ENCODE measurements at regions of chr6 and their contacts with region 1.

Region 1: GRCh38 chr6:2952557-2953095 is 18.7 kb downstream of the SERPINB6 start:
- DNase-seq: peak; percentile 75
- H3K4me3 ChIP-seq: 0 out of 2 replicates have a peak overlapping the region, but pooled peaks have one; percentile 11
- H3K27ac ChIP-seq: peak overlapping the region; percentile 65
- H3K27me3 ChIP-seq: no peaks in the 10 kb centered on the region
- CTCF ChIP-seq: peak; percentile 99

Region 2: DNA sequence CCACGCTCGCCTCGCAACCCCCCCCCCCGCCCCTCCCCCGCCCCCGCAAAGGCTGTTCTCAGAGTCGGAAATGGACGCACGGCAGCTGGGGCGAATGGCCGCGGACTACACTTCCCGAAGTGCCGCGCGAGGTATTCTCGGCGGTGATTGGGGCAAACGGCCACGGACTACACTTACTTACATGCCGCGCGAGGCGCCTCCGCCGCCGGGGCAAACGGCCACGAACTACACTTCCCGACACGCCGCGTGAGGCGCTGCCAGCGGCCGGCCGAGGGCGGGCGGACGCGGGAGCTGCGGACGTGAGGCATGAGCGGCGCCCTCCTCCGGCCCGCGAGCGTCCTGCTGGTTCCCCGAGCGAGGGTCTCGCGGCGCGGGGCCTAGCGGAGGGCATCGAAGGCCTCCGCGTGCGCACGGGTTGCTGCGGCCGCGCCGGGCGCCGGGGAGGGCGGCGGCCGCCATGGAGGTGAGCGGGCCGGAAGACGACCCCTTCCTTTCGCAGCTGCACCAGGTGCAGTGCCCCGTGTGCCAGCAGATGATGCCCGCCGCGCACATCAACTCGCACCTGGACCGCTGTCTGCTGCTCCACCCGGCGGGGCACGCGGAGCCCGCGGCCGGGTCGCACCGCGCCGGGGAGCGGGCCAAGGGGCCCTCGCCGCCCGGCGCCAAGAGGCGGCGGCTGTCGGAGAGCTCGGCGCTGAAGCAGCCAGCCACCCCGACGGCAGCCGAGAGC is 187.3 kb before region 1 on chr6 and contains the start of gene WRNIP1:
- CTCF ChIA-PET with region 1: interaction called, 18 read pairs
- POLR2A ChIA-PET with region 1: interaction called, 3 read pairs
- DNase-seq: peak; percentile 98
- H3K4me3 ChIP-seq: peak within 1 kb of the TSS; percentile 91
- H3K27ac ChIP-seq: peak within 1 kb of the TSS; percentile 92
- H3K27me3 ChIP-seq: no peaks in the 10 kb centered on the region
- CTCF ChIP-seq: peak; percentile 50
- polyA plus RNA-seq, gene WRNIP1: 28.0 and 35.2 TPM in 2 replicates

Region 3: DNA sequence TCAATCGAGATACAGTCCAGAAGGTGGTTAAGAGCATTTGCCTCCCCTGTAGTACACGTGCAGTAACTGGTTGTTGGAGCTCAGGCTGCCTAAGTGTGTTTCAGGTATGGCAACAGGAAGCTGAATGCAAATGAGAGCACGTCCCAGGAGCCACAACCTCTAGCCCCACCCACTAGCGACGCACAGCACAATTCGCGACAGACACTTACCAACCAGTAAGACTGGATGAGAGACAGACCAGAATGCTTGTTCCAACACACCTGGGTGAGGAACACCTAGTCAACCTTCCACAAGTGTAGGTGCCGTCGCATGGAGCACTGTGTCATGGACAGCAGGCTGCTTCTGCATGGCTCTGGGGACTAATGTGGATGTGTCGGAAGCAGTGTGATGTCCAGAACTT is 103.8 kb before region 1 on chr6:
- CTCF ChIA-PET with region 1: interaction called, 24 read pairs
- POLR2A ChIA-PET with region 1: no interaction called
- DNase-seq: no peak
- H3K4me3 ChIP-seq: no peak overlapping the region
- H3K27ac ChIP-seq: no peak overlapping the region
- H3K27me3 ChIP-seq: no peaks in the 10 kb centered on the region
- CTCF ChIP-seq: no peak

Region 4: DNA sequence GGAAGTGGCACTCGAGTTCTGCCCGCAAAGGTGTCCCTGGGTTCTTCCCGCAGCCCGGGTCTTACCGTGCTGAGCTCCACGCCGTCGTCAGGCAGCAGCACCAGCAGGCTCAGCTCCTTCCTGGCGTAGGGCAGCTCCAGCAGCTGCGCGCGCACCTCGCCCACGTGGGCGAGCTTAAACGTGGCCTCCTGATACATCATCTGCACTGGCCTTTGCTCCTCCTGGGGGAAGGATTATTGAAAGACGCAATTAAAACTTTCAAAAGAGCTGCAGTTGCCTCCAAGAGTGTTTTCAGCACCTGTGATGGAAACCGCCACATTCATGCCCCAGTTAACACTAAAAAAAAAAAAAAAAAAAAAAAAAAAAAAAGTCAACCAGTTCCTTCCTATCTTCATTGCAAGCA is 60.9 kb before region 1 on chr6:
- CTCF ChIA-PET with region 1: interaction called, 11 read pairs
- POLR2A ChIA-PET with region 1: no interaction called
- DNase-seq: no peak
- H3K4me3 ChIP-seq: no peak overlapping the region
- H3K27ac ChIP-seq: no peak overlapping the region
- H3K27me3 ChIP-seq: peaks cover 2% of the 10 kb centered on the region
- CTCF ChIP-seq: no peak

Region 5: GRCh38 chr6:2940010-2940850 is 12.4 kb before region 1 on chr6:
- CTCF ChIA-PET with region 1: interaction called, 79 read pairs
- POLR2A ChIA-PET with region 1: no interaction called
- DNase-seq: no peak
- H3K4me3 ChIP-seq: no peak overlapping the region
- H3K27ac ChIP-seq: no peak overlapping the region
- H3K27me3 ChIP-seq: no peaks in the 10 kb centered on the region
- CTCF ChIP-seq: no peak

Region 6: GRCh38 chr6:2982464-2983117 is 30.0 kb after region 1 on chr6:
- CTCF ChIA-PET with region 1: interaction called, 165 read pairs
- POLR2A ChIA-PET with region 1: no interaction called
- DNase-seq: no peak
- H3K4me3 ChIP-seq: no peak overlapping the region
- H3K27ac ChIP-seq: no peak overlapping the region
- H3K27me3 ChIP-seq: no peaks in the 10 kb centered on the region
- CTCF ChIP-seq: no peak

Region 7: GRCh38 chr6:3053231-3053508 is 100.5 kb after region 1 on chr6:
- CTCF ChIA-PET with region 1: interaction called, 13 read pairs
- POLR2A ChIA-PET with region 1: no interaction called
- DNase-seq: no peak
- H3K4me3 ChIP-seq: peak overlapping the region; percentile 56
- H3K27ac ChIP-seq: no peak overlapping the region
- H3K27me3 ChIP-seq: peaks cover 17% of the 10 kb centered on the region
- CTCF ChIP-seq: no peak

Measured in AG04450 (cell line).